ENCODE measurements at regions of chr7 and their contacts with region 1.

Region 1: GRCh38 chr7:16918288-16918895 is 36.6 kb upstream of the AGR3 start:
- DNase-seq: peak; percentile 29
- H3K4me3 Mint-ChIP-seq: no peak overlapping the region
- H3K27ac Mint-ChIP-seq: no peak overlapping the region
- H3K4me1 Mint-ChIP-seq: peaks cover 15% of the 10 kb centered on the region
- H3K27me3 Mint-ChIP-seq: no peaks in the 10 kb centered on the region

Region 2: GRCh38 chr7:16770662-16771329 is 147.6 kb before region 1 on chr7:
- CTCF ChIA-PET with region 1: no interaction called
- DNase-seq: no peak
- H3K4me3 Mint-ChIP-seq: no peak overlapping the region
- H3K27ac Mint-ChIP-seq: no peak overlapping the region
- H3K4me1 Mint-ChIP-seq: no peaks in the 10 kb centered on the region
- H3K27me3 Mint-ChIP-seq: peaks cover 11% of the 10 kb centered on the region

Region 3: GRCh38 chr7:16801111-16801542 is 117.3 kb before region 1 on chr7:
- CTCF ChIA-PET with region 1: interaction called, 32 read pairs
- DNase-seq: no peak
- H3K4me3 Mint-ChIP-seq: no peak overlapping the region
- H3K27ac Mint-ChIP-seq: no peak overlapping the region
- H3K4me1 Mint-ChIP-seq: no peaks in the 10 kb centered on the region
- H3K27me3 Mint-ChIP-seq: no peaks in the 10 kb centered on the region

Region 4: DNA sequence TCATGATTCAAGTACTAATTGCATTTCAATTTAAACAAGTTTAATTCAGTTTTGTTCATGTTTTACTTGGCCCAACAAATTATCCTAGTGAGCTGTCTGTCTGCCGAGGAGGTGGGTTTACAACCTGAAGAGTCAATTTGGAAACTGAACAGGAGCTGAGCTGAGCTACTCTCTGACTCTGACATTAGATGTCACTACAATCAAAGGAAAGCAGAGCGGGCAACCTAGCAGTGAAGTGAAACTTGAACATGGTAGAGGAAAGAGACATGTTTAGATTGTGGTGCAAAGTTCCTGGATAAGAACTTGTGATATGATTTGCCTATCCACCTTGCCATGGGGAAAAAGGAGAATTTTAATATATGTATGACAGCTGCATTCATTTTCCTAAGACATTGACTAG is 27.1 kb before region 1 on chr7:
- CTCF ChIA-PET with region 1: interaction called, 16 read pairs
- DNase-seq: peak; percentile 28
- H3K4me3 Mint-ChIP-seq: no peak overlapping the region
- H3K27ac Mint-ChIP-seq: no peak overlapping the region
- H3K4me1 Mint-ChIP-seq: peaks cover 4% of the 10 kb centered on the region
- H3K27me3 Mint-ChIP-seq: no peaks in the 10 kb centered on the region

Measured in activated naive CD4-positive, alpha-beta T cell treated with anti-CD3 and anti-CD28 coated beads, Interleukin-2, amount 10 ng/mL, durations not matched to agents 7 days and 5 days (primary cell).